ENCODE measurements at regions of chr18 and their contacts with region 1.

Region 1: GRCh38 chr18:12843420-12844350 is 40.4 kb downstream of the PTPN2 start:
- DNase-seq: no peak
- ATAC-seq: no peak
- H3K4me3 Mint-ChIP-seq: no peak overlapping the region
- H3K27ac Mint-ChIP-seq: peak overlapping the region; percentile 64
- H3K4me1 Mint-ChIP-seq: peaks cover 50% of the 10 kb centered on the region
- H3K27me3 Mint-ChIP-seq: no peaks in the 10 kb centered on the region
- CTCF ChIP-seq: no peak

Region 2: GRCh38 chr18:12516049-12516630 is 327.5 kb before region 1 on chr18:
- CTCF ChIA-PET with region 1: no interaction called
- POLR2A ChIA-PET with region 1: no interaction called
- intact Hi-C with region 1: no loop called
- DNase-seq: no peak
- ATAC-seq: no peak
- H3K4me3 Mint-ChIP-seq: no peak overlapping the region
- H3K27ac Mint-ChIP-seq: no peak overlapping the region
- H3K4me1 Mint-ChIP-seq: no peaks in the 10 kb centered on the region
- H3K27me3 Mint-ChIP-seq: no peaks in the 10 kb centered on the region
- CTCF ChIP-seq: no peak

Region 3: DNA sequence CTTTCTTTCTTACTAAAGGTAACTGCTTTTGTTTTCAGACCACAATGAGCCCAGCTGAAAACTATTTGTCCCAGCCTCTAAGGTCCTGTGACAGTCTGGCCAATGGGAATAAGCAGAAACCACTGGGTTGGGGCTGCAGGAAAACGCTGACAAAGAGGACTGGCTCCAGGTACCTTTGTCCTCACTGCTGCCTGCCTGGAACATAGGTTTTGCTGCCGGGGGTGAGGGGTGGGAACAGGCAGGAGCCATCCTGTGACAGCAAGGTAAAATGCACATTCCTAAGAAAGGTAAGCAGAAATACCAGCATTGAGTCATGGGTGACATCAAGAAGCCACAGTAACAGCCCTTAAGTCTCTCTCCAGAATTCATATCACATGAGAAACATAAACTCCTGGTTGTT is 18.8 kb after region 1 on chr18:
- CTCF ChIA-PET with region 1: no interaction called
- POLR2A ChIA-PET with region 1: interaction called, 4 read pairs
- intact Hi-C with region 1: loop called (anchors 2 kb)
- DNase-seq: no peak
- ATAC-seq: no peak
- H3K4me3 Mint-ChIP-seq: no peak overlapping the region
- H3K27ac Mint-ChIP-seq: peak overlapping the region; percentile 53
- H3K4me1 Mint-ChIP-seq: peaks cover 66% of the 10 kb centered on the region
- H3K27me3 Mint-ChIP-seq: no peaks in the 10 kb centered on the region
- CTCF ChIP-seq: no peak

Region 4: GRCh38 chr18:14000884-14001283 is 1157.2 kb after region 1 on chr18:
- CTCF ChIA-PET with region 1: no interaction called
- POLR2A ChIA-PET with region 1: no interaction called
- intact Hi-C with region 1: no loop called
- DNase-seq: no peak
- ATAC-seq: no peak
- H3K4me3 Mint-ChIP-seq: no peak overlapping the region
- H3K27ac Mint-ChIP-seq: no peak overlapping the region
- H3K4me1 Mint-ChIP-seq: no peaks in the 10 kb centered on the region
- H3K27me3 Mint-ChIP-seq: peaks cover 1% of the 10 kb centered on the region
- CTCF ChIP-seq: no peak